ENCODE measurements at regions of chr14 and their contacts with region 1.

Region 1: DNA sequence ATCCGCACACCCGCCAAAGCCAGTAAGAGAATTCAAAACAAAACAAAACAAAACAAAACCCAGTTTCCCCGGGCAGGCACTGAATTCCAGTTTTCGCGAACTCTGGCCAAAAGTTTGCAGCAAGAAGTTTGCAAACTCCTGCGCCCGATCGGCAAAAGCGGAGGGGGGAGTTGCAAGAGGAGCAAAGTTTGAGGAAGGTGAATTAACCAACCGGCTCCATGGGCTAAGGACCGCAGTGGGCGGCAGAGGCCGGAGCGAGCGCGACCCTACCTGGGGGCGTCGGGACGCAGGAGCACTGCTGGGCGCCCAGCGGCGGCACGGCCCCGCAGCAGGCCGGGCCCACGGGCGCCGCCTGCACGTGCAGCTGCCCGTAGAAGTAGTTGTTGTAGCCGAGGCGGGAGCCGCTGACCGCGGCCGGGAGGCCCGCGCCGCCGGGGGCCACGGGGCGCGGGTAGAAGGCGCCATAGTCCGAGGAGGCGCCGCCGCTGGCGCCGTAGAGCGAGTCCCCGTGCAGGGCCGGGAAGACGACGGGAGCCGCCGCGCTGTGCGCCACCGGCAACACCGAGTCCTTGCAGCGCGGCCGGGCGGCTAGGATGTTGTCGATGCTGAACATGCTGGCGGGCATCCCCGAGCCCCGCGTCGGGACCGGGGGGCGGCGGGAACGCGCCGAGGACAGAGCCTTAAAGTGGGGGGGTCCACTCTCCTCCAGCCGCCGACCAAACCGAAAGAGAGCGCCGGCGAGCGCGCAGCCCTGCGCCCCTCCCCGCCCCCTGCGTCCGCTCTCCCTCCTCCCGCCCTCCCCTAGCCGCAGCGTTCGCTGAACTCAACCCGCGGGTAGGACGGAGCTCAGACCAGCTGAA is at the start of gene GSC:
- DNase-seq: peak; percentile 21
- H3K4me3 ChIP-seq: peak within 1 kb of the TSS; percentile 5 to 38 (median 12)
- H3K27ac ChIP-seq: no peak within 1 kb of the TSS
- H3K4me1 ChIP-seq: no peaks in the 10 kb centered on the region
- H3K27me3 ChIP-seq: peaks cover 74 to 94% of the 10 kb centered on the region in 2 experiments
- CTCF ChIP-seq: no peak
- POLR2A ChIP-seq: no peak
- total RNA-seq, gene GSC: not detected in 2 replicates

Region 2: DNA sequence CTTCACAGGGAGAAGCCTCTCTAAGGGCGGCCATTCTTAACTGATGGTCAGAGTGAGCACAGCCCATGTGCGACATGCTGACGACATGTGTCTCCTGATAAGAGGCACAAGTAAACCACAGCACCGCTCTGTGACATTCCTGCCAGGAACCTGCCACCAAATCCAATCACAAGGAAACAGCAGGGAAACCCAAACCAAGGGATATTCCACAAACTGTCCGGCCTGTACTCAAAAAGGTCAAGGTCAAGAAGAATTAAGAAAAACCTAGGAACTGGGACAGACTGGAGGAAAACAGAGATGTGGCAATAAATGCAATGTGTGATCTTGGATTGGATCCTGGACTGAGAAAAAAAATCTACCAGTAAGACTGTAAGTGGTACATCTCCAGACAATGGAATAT is 654.9 kb after region 1 on chr14:
- CTCF ChIA-PET with region 1: no interaction called
- POLR2A ChIA-PET with region 1: no interaction called
- dilution Hi-C with region 1: no loop called
- intact Hi-C with region 1: loop called (anchors 10 kb)
- DNase-seq: no peak
- H3K4me3 ChIP-seq: no peak overlapping the region
- H3K27ac ChIP-seq: no peak overlapping the region
- H3K4me1 ChIP-seq: no peaks in the 10 kb centered on the region
- H3K27me3 ChIP-seq: no peaks in the 10 kb centered on the region
- CTCF ChIP-seq: no peak
- POLR2A ChIP-seq: no peak